ENCODE measurements at regions of chr15 and their contacts with region 1.

Region 1: GRCh38 chr15:57962887-57963286 is 102.6 kb downstream of the ALDH1A2 start:
- DNase-seq: no peak
- H3K4me3 ChIP-seq: no peak overlapping the region
- H3K27ac ChIP-seq: no peak overlapping the region
- H3K4me1 ChIP-seq: no peaks in the 10 kb centered on the region
- H3K27me3 ChIP-seq: peaks cover 6% of the 10 kb centered on the region
- CTCF ChIP-seq: no peak
- EP300 ChIP-seq: no peak
- POLR2A ChIP-seq: no peak

Region 2: GRCh38 chr15:57903626-57904025 is 59.3 kb before region 1 on chr15:
- in situ Hi-C with region 1: no loop called
- intact Hi-C with region 1: no loop called
- DNase-seq: no peak
- H3K4me3 ChIP-seq: no peak overlapping the region
- H3K27ac ChIP-seq: no peak overlapping the region
- H3K4me1 ChIP-seq: no peaks in the 10 kb centered on the region
- H3K27me3 ChIP-seq: peaks cover 7% of the 10 kb centered on the region
- CTCF ChIP-seq: no peak
- EP300 ChIP-seq: no peak
- POLR2A ChIP-seq: no peak

Region 3: DNA sequence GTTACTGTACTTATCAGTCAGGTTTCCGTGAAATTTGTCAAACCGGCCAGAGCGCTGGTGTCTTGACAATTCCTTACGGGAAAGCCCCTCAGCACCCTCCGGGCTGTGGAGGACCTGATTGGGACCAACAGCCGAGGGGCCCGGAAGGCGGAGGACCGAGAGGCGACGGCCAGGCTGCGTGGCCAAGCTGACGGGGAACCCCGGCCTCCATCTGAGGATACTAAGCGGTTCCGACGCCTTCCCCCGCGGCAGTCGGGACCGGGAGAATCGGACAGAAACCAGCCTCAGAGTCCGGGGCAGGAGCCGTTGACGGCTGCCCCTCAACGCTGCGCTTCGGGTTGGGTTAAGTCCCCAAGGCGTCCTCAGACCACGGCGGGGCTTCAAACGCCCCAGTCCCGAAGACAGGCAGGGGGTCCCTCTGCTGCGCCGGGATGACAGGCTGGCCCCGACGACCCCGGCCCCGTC is 102.1 kb after region 1 on chr15:
- in situ Hi-C with region 1: loop called in 1 of 4 experiments (anchors 5 kb)
- intact Hi-C with region 1: no loop called
- DNase-seq: peak; percentile 8
- H3K4me3 ChIP-seq: peak overlapping the region in 2 of 4 donors; percentile 40 to 66
- H3K27ac ChIP-seq: no peak overlapping the region
- H3K4me1 ChIP-seq: peaks cover 3 to 18% (median 13%) of the 10 kb centered on the region in 4 donors
- H3K27me3 ChIP-seq: peaks cover 83% of the 10 kb centered on the region
- CTCF ChIP-seq: no peak
- EP300 ChIP-seq: no peak
- POLR2A ChIP-seq: no peak

Measured in transverse colon (tissue), 4 donors.